Activated CD8-positive, alpha-beta T cell treated with anti-CD3 and anti-CD28 coated beads for 36 hours (primary cell): ENCODE measurements at regions of chr1 and their contacts with region 1.

Region 1: GRCh38 chr1:67194209-67194863 is 28.1 kb downstream of the IL23R start:
- DNase-seq: peak; percentile 23
- ATAC-seq: peak; percentile 35
- H3K4me3 Mint-ChIP-seq: no peak overlapping the region
- H3K27ac Mint-ChIP-seq: peak overlapping the region; percentile 53
- H3K4me1 Mint-ChIP-seq: peaks cover 16% of the 10 kb centered on the region
- H3K27me3 Mint-ChIP-seq: no peaks in the 10 kb centered on the region
- CTCF ChIP-seq: no peak

Region 2: GRCh38 chr1:67162957-67163356 is 31.4 kb before region 1 on chr1:
- CTCF ChIA-PET with region 1: interaction called, 6 read pairs
- POLR2A ChIA-PET with region 1: interaction called, 6 read pairs
- intact Hi-C with region 1: loop called (anchors 5 kb)
- DNase-seq: peak; percentile 79
- ATAC-seq: peak; percentile 76
- H3K4me3 Mint-ChIP-seq: no peak overlapping the region
- H3K27ac Mint-ChIP-seq: peak overlapping the region; percentile 83
- H3K4me1 Mint-ChIP-seq: peaks cover 39% of the 10 kb centered on the region
- H3K27me3 Mint-ChIP-seq: peaks cover 4% of the 10 kb centered on the region
- CTCF ChIP-seq: no peak

Region 3: DNA sequence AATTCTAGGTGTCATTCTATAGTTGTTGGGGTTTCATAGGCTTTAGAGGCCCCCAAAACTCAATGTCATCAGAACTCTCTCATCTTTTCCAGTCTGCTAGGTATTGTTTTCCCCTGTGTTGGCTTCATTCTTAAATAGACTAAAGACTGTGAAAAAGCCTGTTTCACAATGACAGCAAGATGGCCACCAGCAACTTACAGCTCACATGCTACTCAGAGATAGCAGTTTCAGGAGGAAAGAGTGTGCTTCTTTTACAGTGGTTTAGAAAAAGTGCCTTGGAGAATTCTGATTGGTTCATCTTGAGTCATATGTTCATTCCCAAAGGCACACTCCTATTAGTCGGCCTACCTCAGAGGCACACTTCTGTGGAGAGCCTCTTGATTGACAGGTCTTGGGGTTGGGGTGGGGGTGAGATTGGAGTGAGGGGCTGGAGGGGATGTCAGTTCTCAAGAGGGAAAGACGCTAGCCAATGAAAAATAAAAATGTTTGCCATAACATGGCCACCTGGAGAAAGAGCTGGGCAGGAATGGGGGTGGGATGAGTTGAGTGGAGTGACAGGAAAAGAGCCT is 19.5 kb before region 1 on chr1:
- CTCF ChIA-PET with region 1: interaction called, 11 read pairs
- POLR2A ChIA-PET with region 1: interaction called, 11 read pairs
- intact Hi-C with region 1: loop called (anchors 2 kb)
- DNase-seq: peak; percentile 54
- ATAC-seq: peak; percentile 66
- H3K4me3 Mint-ChIP-seq: no peak overlapping the region
- H3K27ac Mint-ChIP-seq: peak overlapping the region; percentile 77
- H3K4me1 Mint-ChIP-seq: peaks cover 56% of the 10 kb centered on the region
- H3K27me3 Mint-ChIP-seq: peaks cover under 1% of the 10 kb centered on the region
- CTCF ChIP-seq: no peak